Pancreas (tissue), 10 donors: ENCODE measurements at regions of chr22 and their contacts with region 1.

Region 1: GRCh38 chr22:28014211-28015045 is 95.4 kb upstream of the PITPNB start:
- DNase-seq: peak in 3 of 6 donors; percentile 13 to 43 (median 41)
- ATAC-seq: no peak
- H3K4me3 ChIP-seq: no peak overlapping the region
- H3K27ac ChIP-seq: no peak overlapping the region
- H3K4me1 ChIP-seq: no peaks in the 10 kb centered on the region
- H3K27me3 ChIP-seq: no peaks in the 10 kb centered on the region
- CTCF ChIP-seq: no peak

Region 2: GRCh38 chr22:27842669-27843431 is 171.6 kb before region 1 on chr22:
- intact Hi-C with region 1: no loop called
- DNase-seq: no peak
- ATAC-seq: peak in 3 of 4 donors; percentile 32 to 58 (median 53)
- H3K4me3 ChIP-seq: no peak overlapping the region
- H3K27ac ChIP-seq: no peak overlapping the region
- H3K4me1 ChIP-seq: peaks cover 0 to 3% (median 0%) of the 10 kb centered on the region in 3 donors
- H3K27me3 ChIP-seq: no peaks in the 10 kb centered on the region
- CTCF ChIP-seq: no peak

Region 3: DNA sequence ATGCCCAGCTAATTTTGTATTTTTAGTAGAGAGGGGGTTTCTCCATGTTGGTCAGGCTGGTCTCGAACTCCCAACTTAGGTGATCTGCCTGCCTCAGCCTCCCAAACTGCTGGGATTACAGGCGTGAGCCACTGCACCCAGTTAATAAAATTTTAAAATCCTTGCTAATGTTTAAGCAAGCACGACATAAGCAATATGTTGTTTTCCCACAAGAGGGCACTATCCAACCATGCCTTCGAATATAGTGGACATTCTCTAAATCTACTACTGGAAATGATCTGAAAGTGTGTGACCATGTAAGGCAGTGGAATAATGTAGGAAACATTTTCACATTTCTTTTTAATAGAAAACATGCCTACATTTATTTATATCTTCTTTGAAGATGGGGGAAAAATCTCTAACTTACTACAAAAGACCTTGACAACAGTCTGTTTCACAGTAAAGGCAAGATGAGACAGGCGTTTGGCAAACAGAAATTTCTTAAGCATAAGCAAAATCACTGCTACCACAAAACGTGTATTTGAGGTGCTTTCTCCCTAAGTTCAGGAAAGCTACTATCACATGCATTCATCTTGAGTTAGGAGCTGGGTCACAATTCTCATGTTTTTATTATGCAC is 133.5 kb before region 1 on chr22:
- intact Hi-C with region 1: loop called in 2 of 3 experiments (anchors 2 to 5 kb)
- DNase-seq: peak in 2 of 6 donors; percentile 21 to 49
- ATAC-seq: peak; percentile 74 to 93 (median 91)
- H3K4me3 ChIP-seq: no peak overlapping the region
- H3K27ac ChIP-seq: no peak overlapping the region
- H3K4me1 ChIP-seq: peaks cover 21 to 34% (median 24%) of the 10 kb centered on the region in 3 donors
- H3K27me3 ChIP-seq: no peaks in the 10 kb centered on the region
- CTCF ChIP-seq: peak; percentile 43 to 74 (median 60)

Region 4: GRCh38 chr22:27919222-27919941 is 95.0 kb before region 1 on chr22 and contains the start of gene PITPNB:
- intact Hi-C with region 1: no loop called
- DNase-seq: peak; percentile 97 to 100 (median 100)
- ATAC-seq: peak; percentile 93 to 99 (median 98)
- H3K4me3 ChIP-seq: peak within 1 kb of the TSS; percentile 88 to 91 (median 90)
- H3K27ac ChIP-seq: peak within 1 kb of the TSS; percentile 67 to 95 (median 92)
- H3K4me1 ChIP-seq: peaks cover 4 to 31% (median 22%) of the 10 kb centered on the region in 3 donors
- H3K27me3 ChIP-seq: no peaks in the 10 kb centered on the region
- CTCF ChIP-seq: no peak
- total RNA-seq, gene PITPNB: 20.4 to 38.0 (median 26.9) TPM

Region 5: GRCh38 chr22:28075358-28075981 is 61.0 kb after region 1 on chr22:
- intact Hi-C with region 1: no loop called
- DNase-seq: peak in 4 of 6 donors; percentile 45 to 70 (median 58)
- ATAC-seq: peak; percentile 97 to 99 (median 98)
- H3K4me3 ChIP-seq: no peak overlapping the region
- H3K27ac ChIP-seq: peak overlapping the region; percentile 41 to 73 (median 68)
- H3K4me1 ChIP-seq: peaks cover 18 to 20% (median 20%) of the 10 kb centered on the region in 3 donors
- H3K27me3 ChIP-seq: no peaks in the 10 kb centered on the region
- CTCF ChIP-seq: no peak